CD4-positive, alpha-beta memory T cell (primary cell): ENCODE measurements at regions of chr16 and their contacts with region 1.

Region 1: GRCh38 chr16:3123986-3124886 is 10.6 kb upstream of the ZNF213 start:
- DNase-seq: peak; percentile 96 to 97 (median 96)
- H3K4me3 ChIP-seq: peak overlapping the region; percentile 85 to 97
- H3K4me3 Mint-ChIP-seq: peak overlapping the region; percentile 94 to 98 (median 96)
- H3K27ac ChIP-seq: peak overlapping the region; percentile 50
- H3K27ac Mint-ChIP-seq: peak overlapping the region; percentile 95 to 99 (median 97)
- H3K4me1 ChIP-seq: peaks cover 40% of the 10 kb centered on the region
- H3K4me1 Mint-ChIP-seq: peaks cover 18 to 52% (median 32%) of the 10 kb centered on the region in 4 donors
- H3K27me3 ChIP-seq: no peaks in the 10 kb centered on the region
- H3K27me3 Mint-ChIP-seq: no peaks in the 10 kb centered on the region

Region 2: DNA sequence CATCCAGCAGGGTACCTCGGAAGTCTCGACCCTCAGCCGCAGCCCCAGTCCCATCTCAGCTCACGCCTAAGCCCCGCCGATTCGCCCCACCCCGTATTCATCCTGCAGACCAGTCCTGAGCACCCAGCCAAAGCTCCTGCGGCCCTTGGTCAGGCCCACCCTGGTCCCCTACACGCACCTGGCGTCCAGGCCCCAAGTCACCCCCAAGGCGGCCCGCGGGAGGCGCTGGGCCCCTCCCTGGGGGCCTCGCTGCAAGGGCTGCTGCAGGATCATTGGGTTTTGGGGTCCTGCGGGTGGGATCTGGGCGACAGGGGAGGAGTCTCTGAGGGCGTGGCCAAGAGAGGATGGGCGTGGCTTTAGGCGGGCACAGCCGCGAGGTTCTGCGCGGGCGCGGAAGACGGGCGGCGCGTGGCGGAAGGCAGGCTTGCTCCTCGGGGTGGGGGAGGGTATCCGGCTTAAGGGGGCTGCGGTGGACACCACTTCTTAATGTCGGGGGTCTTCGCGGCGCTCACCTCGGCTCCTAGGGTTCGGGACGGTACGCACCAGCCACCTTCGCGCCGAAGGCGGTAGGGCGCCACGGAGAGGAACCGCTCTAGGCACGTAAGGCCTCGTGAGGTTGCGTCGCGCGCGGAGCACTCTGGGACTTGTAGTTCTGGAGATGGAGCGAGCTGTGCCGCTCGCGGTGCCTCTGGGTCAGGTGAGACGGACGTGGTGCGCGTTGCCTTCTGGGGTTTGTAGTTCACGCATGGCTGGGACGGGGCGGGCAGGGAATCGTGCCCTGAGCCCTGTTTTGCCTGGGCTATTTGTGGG is 100.4 kb before region 1 on chr16 and contains the starts of genes HCFC1R1 and THOC6:
- CTCF ChIA-PET with region 1: interaction called, 277 read pairs
- POLR2A ChIA-PET with region 1: interaction called, 9 read pairs
- intact Hi-C with region 1: no loop called
- DNase-seq: peak; percentile 95 to 97 (median 95)
- H3K4me3 ChIP-seq: peak within 1 kb of the TSS; percentile 38 to 85
- H3K4me3 Mint-ChIP-seq: peak within 1 kb of the TSS; percentile 87 to 97 (median 93)
- H3K27ac ChIP-seq: peak within 1 kb of the TSS; percentile 90
- H3K27ac Mint-ChIP-seq: peak within 1 kb of the TSS; percentile 97 to 99 (median 99)
- H3K4me1 ChIP-seq: peaks cover 56% of the 10 kb centered on the region
- H3K4me1 Mint-ChIP-seq: peaks cover 22 to 67% (median 45%) of the 10 kb centered on the region in 4 donors
- H3K27me3 ChIP-seq: peaks cover 2% of the 10 kb centered on the region
- H3K27me3 Mint-ChIP-seq: no peaks in the 10 kb centered on the region
- total RNA-seq, gene HCFC1R1: 16.0 to 18.0 TPM
- total RNA-seq, gene THOC6: 18.4 to 22.5 TPM

Region 3: DNA sequence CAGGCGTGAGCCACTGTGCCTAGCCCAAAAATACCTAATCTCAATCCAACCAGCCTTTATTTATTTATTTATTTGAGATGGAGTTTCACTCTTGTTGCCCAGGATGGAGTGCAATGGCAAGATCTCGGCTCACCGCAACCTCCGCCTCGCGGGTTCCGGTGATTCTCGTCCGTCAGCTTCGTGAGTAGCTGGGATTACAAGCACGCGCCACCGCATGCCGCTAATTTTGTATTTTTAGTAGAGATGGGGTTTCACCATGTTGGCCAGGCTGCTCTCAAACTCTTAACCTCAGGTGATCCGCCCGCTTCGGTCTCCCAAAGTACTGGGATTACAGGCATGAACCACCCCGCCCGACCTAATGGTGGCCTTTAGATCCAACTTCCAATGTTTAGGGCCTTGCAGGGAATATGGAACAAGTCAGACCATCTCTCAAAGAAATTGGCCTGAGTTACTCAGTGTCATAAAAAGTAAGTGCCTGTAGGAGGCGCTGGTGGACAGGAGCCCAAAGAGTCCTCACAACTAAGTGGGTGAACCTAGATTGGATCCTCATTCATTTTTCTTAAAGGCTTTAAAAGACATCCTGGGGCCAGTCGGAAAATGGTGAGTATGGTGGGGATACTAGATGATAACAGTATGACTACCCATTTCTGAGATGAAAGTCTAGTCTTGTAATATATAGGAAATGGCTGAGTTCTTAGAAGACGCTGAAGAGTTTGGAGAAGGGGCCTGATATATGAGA is 29.8 kb before region 1 on chr16:
- CTCF ChIA-PET with region 1: interaction called, 376 read pairs
- POLR2A ChIA-PET with region 1: interaction called, 146 read pairs
- intact Hi-C with region 1: loop called (anchors 1 kb)
- DNase-seq: peak; percentile 58 to 76 (median 66)
- H3K4me3 ChIP-seq: no peak overlapping the region
- H3K4me3 Mint-ChIP-seq: peak overlapping the region in 5 of 8 donors; percentile 3 to 77 (median 22)
- H3K27ac ChIP-seq: no peak overlapping the region
- H3K27ac Mint-ChIP-seq: peak overlapping the region; percentile 17 to 95 (median 78)
- H3K4me1 ChIP-seq: peaks cover 45% of the 10 kb centered on the region
- H3K4me1 Mint-ChIP-seq: peaks cover 9 to 56% (median 32%) of the 10 kb centered on the region in 4 donors
- H3K27me3 ChIP-seq: no peaks in the 10 kb centered on the region
- H3K27me3 Mint-ChIP-seq: no peaks in the 10 kb centered on the region

Region 4: GRCh38 chr16:3106205-3106928 is 17.9 kb before region 1 on chr16:
- CTCF ChIA-PET with region 1: interaction called, 376 read pairs
- POLR2A ChIA-PET with region 1: interaction called, 146 read pairs
- intact Hi-C with region 1: no loop called
- DNase-seq: peak; percentile 87 to 90 (median 88)
- H3K4me3 ChIP-seq: peak overlapping the region; percentile 38 to 58
- H3K4me3 Mint-ChIP-seq: peak overlapping the region; percentile 78 to 92 (median 88)
- H3K27ac ChIP-seq: peak overlapping the region; percentile 82
- H3K27ac Mint-ChIP-seq: peak overlapping the region; percentile 86 to 95 (median 92)
- H3K4me1 ChIP-seq: peaks cover 37% of the 10 kb centered on the region
- H3K4me1 Mint-ChIP-seq: peaks cover 12 to 41% (median 27%) of the 10 kb centered on the region in 4 donors
- H3K27me3 ChIP-seq: no peaks in the 10 kb centered on the region
- H3K27me3 Mint-ChIP-seq: no peaks in the 10 kb centered on the region